ENCODE measurements at regions of chr12 and their contacts with region 1.

Region 1: GRCh38 chr12:49358483-49359141 is 8.7 kb upstream of the SPATS2 start:
- DNase-seq: peak in 1 of 2 experiments; percentile 67
- H3K4me3 ChIP-seq: no peak overlapping the region
- H3K27ac ChIP-seq: no peak overlapping the region
- H3K4me1 ChIP-seq: peaks cover 0 to 3% (median 0%) of the 10 kb centered on the region in 4 experiments; a peak in 1 of 7 replicates
- H3K27me3 ChIP-seq: no peaks in the 10 kb centered on the region
- CTCF ChIP-seq: peak; percentile 38 to 93 (median 79)
- EP300 ChIP-seq: no peak
- POLR2A ChIP-seq: no peak
- RAD21 ChIP-seq: peak; percentile 97

Region 2: GRCh38 chr12:49331380-49332222 is 27.0 kb before region 1 on chr12:
- CTCF ChIA-PET with region 1: interaction called, 193 read pairs
- POLR2A ChIA-PET with region 1: no interaction called
- DNase-seq: peak in 1 of 2 experiments; percentile 68
- H3K4me3 ChIP-seq: no peak overlapping the region
- H3K27ac ChIP-seq: no peak overlapping the region
- H3K4me1 ChIP-seq: no peaks in the 10 kb centered on the region; a peak in 2 of 7 replicates
- H3K27me3 ChIP-seq: peaks cover 33 to 50% (median 43%) of the 10 kb centered on the region in 4 experiments
- CTCF ChIP-seq: peak; percentile 86 to 89 (median 88)
- EP300 ChIP-seq: no peak
- POLR2A ChIP-seq: no peak
- RAD21 ChIP-seq: peak; percentile 86 to 93

Region 3: DNA sequence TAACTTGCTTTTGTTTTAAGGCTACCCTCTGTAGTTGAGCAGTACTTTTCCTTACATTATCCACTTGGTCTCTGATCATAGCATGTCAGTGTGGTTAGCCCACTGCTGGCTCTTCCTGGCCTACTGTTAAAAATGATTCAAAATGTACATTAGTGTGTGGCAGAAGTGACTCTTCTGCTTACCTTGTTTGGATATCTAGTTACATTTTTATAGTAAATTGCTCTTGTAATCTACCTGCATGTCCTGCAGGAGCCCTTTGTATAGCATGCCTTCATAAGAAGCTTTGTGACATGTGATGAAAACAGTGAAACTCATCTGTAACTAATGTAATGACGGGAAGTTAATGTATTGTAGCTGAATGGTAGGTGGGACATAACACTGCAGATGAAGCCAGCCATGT is 16.8 kb after region 1 on chr12:
- CTCF ChIA-PET with region 1: interaction called, 38 read pairs
- POLR2A ChIA-PET with region 1: interaction called, 6 read pairs
- DNase-seq: no peak
- H3K4me3 ChIP-seq: no peak overlapping the region
- H3K27ac ChIP-seq: no peak overlapping the region
- H3K4me1 ChIP-seq: no peaks in the 10 kb centered on the region
- H3K27me3 ChIP-seq: no peaks in the 10 kb centered on the region
- CTCF ChIP-seq: no peak
- EP300 ChIP-seq: no peak
- POLR2A ChIP-seq: no peak
- RAD21 ChIP-seq: no peak

Region 4: DNA sequence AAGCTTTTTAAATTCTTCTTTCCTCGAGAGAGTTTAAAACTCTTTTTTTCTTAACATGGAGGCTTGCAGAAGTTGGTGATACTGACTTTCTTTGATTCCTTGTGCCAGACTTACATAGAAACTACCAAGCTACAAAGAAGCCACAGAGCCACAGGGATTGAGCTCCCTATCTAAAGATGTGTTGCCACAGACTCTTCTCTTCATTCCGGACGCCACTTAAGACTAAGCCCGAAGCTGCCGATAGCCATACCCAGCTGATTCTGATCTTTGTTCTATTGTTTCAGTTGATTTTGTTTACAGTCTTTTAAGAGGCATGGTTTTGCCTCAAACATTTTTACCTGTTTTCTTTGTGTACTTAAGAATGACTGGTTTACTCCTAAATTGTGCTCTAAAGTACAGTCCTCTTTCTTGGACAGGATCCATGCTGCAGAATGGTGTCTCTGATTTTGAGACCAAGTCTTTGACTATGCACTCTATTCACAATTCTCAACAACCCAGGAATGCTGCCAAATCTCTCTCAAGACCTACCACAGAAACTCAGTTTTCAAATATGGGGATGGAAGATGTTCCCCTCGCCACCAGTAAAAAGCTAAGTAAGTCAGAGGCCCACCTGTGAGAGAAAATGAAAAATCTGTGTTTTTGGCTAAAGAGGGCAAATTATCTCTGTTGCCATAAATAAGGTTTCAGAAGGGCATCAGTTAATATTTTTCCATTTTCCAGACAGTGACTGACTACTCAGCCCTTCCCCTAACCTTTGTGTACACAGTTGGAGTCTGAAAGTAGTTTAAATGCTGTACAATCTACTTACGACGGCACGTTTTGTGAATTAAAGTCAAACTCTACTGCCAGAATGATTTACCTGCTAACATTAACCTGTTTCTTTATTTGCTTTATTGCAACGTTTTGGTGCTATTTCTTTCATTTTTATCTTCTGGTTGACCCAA is 138.1 kb after region 1 on chr12:
- CTCF ChIA-PET with region 1: interaction called, 538 read pairs
- POLR2A ChIA-PET with region 1: no interaction called
- DNase-seq: no peak
- H3K4me3 ChIP-seq: no peak overlapping the region
- H3K27ac ChIP-seq: no peak overlapping the region
- H3K4me1 ChIP-seq: no peaks in the 10 kb centered on the region
- H3K27me3 ChIP-seq: no peaks in the 10 kb centered on the region
- CTCF ChIP-seq: no peak
- EP300 ChIP-seq: no peak
- POLR2A ChIP-seq: no peak
- RAD21 ChIP-seq: no peak

Region 5: DNA sequence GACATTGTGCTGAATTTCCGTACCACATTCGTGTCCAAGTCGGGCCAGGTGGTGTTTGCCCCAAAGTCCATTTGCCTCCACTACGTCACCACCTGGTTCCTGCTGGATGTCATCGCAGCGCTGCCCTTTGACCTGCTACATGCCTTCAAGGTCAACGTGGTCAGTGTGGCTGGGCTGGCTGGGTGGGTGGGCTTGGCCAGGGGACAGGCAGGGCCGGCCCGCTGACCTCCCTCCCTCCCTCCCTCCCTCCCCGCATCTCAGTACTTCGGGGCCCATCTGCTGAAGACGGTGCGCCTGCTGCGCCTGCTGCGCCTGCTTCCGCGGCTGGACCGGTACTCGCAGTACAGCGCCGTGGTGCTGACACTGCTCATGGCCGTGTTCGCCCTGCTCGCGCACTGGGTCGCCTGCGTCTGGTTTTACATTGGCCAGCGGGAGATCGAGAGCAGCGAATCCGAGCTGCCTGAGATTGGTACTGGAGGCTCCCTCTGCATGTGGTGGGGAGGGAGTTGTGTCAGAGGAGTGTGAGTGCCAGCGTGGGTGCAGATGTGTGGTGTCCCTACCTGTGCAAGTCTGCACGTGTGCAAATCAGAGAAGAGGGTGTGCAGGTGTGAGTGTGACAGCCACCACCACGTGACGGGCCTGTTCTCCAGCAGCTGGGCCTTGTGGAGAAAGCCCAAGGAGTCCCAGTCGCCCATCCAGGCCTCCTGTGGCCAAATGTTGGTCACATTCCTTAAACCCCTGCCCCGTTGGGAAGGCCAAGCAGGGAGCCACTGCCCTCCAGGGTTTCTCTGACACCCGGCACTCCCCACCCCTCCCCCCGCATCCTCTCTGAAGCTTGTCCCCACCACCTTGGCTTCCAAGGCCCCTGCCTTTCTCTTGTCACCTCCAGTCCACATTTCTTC is 185.6 kb after region 1 on chr12:
- CTCF ChIA-PET with region 1: interaction called, 140 read pairs
- POLR2A ChIA-PET with region 1: no interaction called
- DNase-seq: no peak
- H3K4me3 ChIP-seq: peak overlapping the region; percentile 32 to 51 (median 44)
- H3K27ac ChIP-seq: no peak overlapping the region
- H3K4me1 ChIP-seq: peaks cover 0 to 31% (median 17%) of the 10 kb centered on the region in 4 experiments; a peak in 6 of 7 replicates
- H3K27me3 ChIP-seq: peaks cover 46 to 98% (median 94%) of the 10 kb centered on the region in 4 experiments
- CTCF ChIP-seq: no peak
- EP300 ChIP-seq: no peak
- POLR2A ChIP-seq: no peak
- RAD21 ChIP-seq: no peak